A673 (cell line): ENCODE measurements at regions of chr2 and their contacts with region 1.

Region 1: GRCh38 chr2:15058015-15058720 is 425.7 kb downstream of the LRATD1 start:
- DNase-seq: peak; percentile 61
- H3K4me3 ChIP-seq: no peak overlapping the region
- H3K27ac ChIP-seq: no peak overlapping the region
- H3K4me1 ChIP-seq: no peaks in the 10 kb centered on the region
- H3K27me3 ChIP-seq: peaks cover 14% of the 10 kb centered on the region
- CTCF ChIP-seq: peak; percentile 70

Region 2: GRCh38 chr2:15092691-15093090 is 34.5 kb after region 1 on chr2:
- CTCF ChIA-PET with region 1: no interaction called
- POLR2A ChIA-PET with region 1: no interaction called
- intact Hi-C with region 1: loop called (anchors 2 kb)
- DNase-seq: peak; percentile 88
- H3K4me3 ChIP-seq: no peak overlapping the region
- H3K27ac ChIP-seq: peak overlapping the region; percentile 44
- H3K4me1 ChIP-seq: peaks cover 24% of the 10 kb centered on the region
- H3K27me3 ChIP-seq: no peaks in the 10 kb centered on the region
- CTCF ChIP-seq: no peak